Activated CD8-positive, alpha-beta T cell treated with anti-CD3 and anti-CD28 coated beads, Interleukin-2, amount 10 ng/mL, durations not matched to agents 7 days and 5 days (primary cell): ENCODE measurements at regions of chr11 and their contacts with region 1.

Region 1: DNA sequence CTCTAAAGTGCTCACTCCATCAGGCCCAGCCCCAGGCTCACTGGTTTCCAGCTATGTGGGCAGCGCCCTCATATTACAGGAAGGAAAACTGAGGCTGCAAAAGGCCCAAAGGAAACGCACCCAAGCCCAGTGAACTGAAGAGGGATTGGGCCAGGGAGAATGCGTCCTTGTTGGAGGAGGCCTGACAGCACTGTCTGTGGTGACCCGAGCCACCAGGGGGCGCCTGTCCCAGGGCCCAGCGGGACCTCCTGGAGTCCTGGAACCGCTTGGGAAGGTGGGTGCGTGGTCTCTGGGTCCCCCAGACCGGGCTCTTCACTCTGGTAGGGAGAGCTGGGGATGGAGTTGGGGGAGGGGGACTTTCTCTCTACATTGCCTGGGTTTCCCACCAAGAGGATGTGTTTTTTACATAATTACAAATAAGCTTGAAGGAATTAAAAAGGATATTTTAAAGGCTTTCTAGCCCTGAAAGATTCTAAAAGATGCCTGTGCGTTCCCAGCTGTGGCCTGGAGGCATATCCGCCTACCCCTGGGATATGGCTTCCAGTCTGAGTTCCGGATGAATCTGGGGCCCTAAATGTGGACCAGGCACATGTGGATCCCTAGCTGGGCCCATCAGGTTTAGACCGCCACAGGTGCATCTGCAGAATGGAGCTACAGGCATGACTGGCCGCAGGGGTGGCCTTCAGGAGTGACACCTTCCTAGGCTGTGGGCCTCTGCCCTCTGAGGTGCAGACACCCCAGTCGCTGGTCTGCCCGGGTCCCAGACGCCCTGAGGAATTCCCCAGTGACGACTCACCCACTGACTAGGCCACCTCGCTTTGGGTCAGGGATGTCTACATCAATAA is 4.2 kb downstream of the SPI1 start:
- DNase-seq: peak; percentile 85
- ATAC-seq: peak; percentile 95
- H3K4me3 Mint-ChIP-seq: no peak overlapping the region
- H3K27ac Mint-ChIP-seq: no peak overlapping the region
- H3K4me1 Mint-ChIP-seq: peaks cover 14% of the 10 kb centered on the region
- H3K27me3 Mint-ChIP-seq: peaks cover 3% of the 10 kb centered on the region

Region 2: DNA sequence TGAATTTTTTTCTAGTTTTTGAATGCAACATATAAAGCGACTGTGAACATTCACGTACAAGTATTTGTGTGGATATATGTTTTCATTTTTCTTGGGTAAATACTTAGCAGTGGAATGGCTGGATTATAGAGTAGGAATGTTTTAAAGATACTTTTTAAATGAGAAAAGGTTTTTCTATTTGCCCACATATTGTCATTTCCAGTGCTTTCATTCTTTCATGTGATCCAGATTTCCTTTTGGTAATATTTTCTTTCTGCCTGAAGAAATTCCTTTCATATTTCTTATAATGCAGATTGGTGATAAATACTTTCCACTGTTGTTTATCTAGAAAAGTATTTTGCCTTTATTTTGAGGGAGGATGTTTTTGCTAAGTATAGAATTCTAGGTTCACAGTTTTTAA is 151.4 kb before region 1 on chr11:
- CTCF ChIA-PET with region 1: no interaction called
- POLR2A ChIA-PET with region 1: no interaction called
- DNase-seq: no peak
- ATAC-seq: no peak
- H3K4me3 Mint-ChIP-seq: no peak overlapping the region
- H3K27ac Mint-ChIP-seq: no peak overlapping the region
- H3K4me1 Mint-ChIP-seq: peaks cover 49% of the 10 kb centered on the region
- H3K27me3 Mint-ChIP-seq: no peaks in the 10 kb centered on the region

Region 3: DNA sequence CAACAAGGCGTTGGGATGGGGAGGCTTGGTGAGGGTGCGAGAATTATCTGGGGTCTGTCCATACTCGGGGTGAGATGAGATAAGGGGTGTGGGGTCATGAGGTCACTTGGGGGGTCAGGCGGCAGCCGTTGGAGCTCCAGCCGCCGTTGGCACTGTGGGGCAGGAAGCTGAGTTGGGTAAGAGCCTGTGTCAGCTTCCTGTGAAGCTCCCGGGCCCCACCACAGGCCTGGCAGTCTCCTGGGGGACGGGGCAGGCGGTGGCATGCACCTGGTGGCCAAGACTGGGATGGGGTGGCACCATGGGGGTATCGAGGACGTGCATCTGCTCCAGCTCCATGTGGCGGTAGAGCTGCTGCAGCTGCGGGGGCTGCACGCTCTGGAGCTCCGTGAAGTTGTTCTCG is 14.5 kb before region 1 on chr11:
- CTCF ChIA-PET with region 1: interaction called, 24 read pairs
- POLR2A ChIA-PET with region 1: no interaction called
- DNase-seq: peak; percentile 37
- ATAC-seq: peak; percentile 60
- H3K4me3 Mint-ChIP-seq: no peak overlapping the region
- H3K27ac Mint-ChIP-seq: peak overlapping the region; percentile 75
- H3K4me1 Mint-ChIP-seq: peaks cover 15% of the 10 kb centered on the region
- H3K27me3 Mint-ChIP-seq: no peaks in the 10 kb centered on the region

Region 4: DNA sequence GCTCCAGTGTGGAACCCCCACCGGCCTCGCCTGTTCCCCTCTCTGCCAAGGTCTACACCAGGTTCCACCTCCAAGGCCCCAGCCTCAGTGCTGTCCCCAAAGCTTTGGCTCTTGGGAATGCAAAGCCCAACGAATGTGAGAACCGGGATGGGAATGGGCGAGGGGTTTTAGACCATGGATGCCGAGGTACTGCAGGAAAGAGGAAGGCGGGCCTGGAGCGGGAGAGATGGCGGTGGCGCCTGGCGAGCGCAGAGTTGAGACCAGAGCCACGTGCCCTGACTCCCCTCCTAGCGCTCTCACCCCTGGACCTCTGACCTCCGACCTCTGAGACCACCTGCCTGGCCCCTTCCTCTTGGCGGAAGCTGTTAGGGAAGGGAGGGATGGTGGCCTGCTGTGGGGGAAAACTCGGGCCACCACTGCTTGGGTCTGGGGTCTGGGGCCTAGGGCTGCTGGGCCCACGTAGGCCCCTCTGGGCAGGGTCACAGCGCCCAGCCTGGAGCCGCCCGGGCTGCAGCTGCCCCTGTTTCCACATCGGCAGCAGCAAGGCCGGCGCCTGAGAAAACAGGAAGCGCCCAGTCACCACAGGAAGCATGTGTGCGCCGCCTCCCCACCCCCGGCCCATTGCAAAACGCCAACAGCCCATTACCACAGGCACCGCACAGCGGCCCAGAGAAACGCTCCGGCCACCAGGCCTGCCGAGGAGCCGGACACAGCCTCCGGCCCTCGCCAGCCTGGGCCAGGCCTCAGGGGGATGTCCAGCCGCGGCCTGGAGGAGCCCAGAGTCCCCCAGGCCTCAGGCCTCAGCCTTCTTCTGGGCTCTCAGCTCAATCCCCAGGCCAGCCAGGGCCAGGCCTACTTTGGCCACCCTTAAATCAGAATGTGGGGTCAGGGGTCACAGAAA is 20.5 kb after region 1 on chr11:
- CTCF ChIA-PET with region 1: interaction called, 77 read pairs
- POLR2A ChIA-PET with region 1: interaction called, 3 read pairs
- DNase-seq: peak; percentile 71
- ATAC-seq: peak; percentile 80
- H3K4me3 Mint-ChIP-seq: peak overlapping the region; percentile 36
- H3K27ac Mint-ChIP-seq: peak overlapping the region; percentile 93
- H3K4me1 Mint-ChIP-seq: peaks cover 39% of the 10 kb centered on the region
- H3K27me3 Mint-ChIP-seq: no peaks in the 10 kb centered on the region

Region 5: DNA sequence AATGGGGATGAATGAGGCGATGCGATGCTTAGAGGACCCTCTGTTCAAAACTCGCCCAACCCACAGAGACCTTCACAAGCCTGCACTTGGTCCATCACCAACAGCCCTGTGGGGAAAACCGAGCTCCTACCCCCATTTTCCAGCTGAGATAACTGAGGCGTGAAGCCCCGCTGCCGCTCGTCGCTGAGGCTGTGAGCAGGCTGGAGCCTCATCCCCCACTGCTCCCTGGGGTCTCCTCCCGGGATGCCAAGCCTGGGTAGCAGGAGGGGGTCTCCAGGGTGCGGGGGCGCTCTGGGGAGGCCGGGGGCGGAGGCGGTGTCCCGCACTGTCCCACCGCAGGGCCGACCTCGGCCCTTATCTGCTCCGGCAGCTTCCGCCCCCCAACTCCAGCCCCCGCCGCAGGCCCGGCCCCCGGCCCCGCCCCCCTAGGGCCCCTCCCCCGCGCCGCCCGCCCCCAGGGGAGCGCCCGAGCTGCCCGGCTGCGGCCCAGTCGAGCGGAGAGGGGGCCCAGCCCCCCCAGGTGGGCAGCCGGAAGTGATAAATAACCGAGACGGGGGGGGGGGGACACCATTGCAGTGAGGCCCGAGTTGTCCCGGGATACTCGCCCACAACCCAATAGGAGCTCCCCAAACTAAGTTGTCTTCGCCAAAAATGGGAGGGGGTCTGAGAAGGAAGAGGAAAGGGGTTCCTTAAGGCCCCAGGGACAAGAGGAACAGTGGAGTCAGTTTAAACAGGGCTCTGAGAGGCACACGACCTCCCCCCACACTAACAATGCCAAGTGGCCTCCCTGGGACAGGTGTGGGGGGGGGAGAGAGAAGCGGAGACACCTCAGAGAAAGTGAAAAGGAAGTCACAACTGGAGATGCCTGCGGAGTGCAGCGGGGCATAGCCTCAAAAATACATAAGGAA is 26.0 kb after region 1 on chr11:
- CTCF ChIA-PET with region 1: interaction called, 77 read pairs
- POLR2A ChIA-PET with region 1: interaction called, 3 read pairs
- DNase-seq: no peak
- ATAC-seq: peak; percentile 71
- H3K4me3 Mint-ChIP-seq: peak overlapping the region; percentile 68
- H3K27ac Mint-ChIP-seq: peak overlapping the region; percentile 63
- H3K4me1 Mint-ChIP-seq: peaks cover 20% of the 10 kb centered on the region
- H3K27me3 Mint-ChIP-seq: no peaks in the 10 kb centered on the region

Region 6: GRCh38 chr11:47407746-47408590 is 33.9 kb after region 1 on chr11 and contains the start of gene SLC39A13:
- CTCF ChIA-PET with region 1: interaction called, 133 read pairs
- POLR2A ChIA-PET with region 1: no interaction called
- DNase-seq: peak; percentile 91
- ATAC-seq: peak; percentile 84
- H3K4me3 Mint-ChIP-seq: peak within 1 kb of the TSS; percentile 91
- H3K27ac Mint-ChIP-seq: peak within 1 kb of the TSS; percentile 90
- H3K4me1 Mint-ChIP-seq: peaks cover 20% of the 10 kb centered on the region
- H3K27me3 Mint-ChIP-seq: no peaks in the 10 kb centered on the region
- total RNA-seq, gene SLC39A13: 19.2 to 20.0 TPM

Region 7: DNA sequence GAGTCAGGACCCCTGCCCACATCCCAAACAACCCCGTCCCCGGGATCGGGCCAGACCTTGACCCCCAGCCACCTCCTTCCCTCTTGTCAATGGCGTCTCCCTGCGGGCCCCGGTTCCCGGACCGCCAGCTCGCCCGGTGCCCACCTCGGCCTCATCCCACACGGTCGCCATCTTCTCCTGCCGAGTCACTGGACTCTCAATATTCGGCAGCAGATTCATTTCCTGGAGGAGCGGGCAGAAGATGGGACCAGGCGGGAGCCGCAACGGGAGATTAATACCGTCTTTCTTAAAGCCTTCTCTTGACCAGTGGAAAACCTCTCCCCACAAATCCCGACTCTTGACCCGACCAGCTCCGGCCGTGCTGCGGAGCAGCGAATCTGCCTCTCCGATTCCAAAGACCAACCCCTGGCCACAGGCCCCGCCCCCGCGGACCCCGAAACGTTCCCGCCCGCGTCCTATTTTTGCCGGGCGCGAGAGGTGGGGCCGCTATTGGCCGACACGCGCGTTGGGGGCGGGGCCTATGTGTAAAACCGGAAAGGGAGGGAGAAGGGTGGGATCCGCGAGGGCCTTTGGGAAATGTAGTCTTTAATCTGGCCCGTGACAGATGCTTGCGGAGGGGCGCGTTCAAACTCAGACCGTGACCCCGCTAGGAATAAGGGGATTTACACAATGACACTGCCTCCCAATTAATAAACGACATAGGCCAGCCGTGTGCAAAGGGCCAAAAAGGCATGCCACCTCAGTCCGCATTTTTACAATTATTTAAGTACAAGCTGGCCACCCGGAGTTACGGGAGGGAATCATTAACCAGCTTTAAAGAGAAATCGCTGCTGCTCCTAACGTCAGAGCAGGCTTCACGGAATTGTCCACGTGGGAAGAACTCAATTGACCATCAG is 52.2 kb after region 1 on chr11 and contains the start of gene PSMC3:
- CTCF ChIA-PET with region 1: interaction called, 16 read pairs
- POLR2A ChIA-PET with region 1: no interaction called
- DNase-seq: peak; percentile 99
- ATAC-seq: peak; percentile 96
- H3K4me3 Mint-ChIP-seq: peak within 1 kb of the TSS; percentile 100
- H3K27ac Mint-ChIP-seq: peak within 1 kb of the TSS; percentile 100
- H3K4me1 Mint-ChIP-seq: peaks cover 29% of the 10 kb centered on the region
- H3K27me3 Mint-ChIP-seq: no peaks in the 10 kb centered on the region
- total RNA-seq, gene PSMC3: 179 TPM

Region 8: DNA sequence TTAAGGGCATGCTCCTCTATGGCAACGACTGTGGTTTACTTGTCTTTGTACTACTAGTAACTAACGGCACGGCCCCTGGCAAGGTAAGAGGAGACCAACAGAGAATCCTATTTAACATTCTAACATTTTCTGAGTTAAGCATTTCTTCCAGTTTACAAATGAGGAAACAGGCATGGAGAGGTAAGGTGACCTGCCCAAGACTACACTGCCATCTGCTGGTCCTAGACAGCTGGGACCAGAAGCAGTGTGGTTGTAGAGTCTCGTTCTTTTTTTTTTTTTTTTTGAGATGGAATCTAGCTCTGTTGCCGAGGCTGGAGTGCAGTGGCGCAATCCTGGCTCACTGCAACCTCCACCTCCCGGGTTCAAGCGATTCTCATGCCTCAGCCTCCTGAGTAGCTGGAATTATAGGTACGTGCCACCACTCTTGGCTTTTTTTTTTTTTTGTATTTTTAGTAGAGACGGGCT is 80.1 kb after region 1 on chr11:
- CTCF ChIA-PET with region 1: interaction called, 25 read pairs
- POLR2A ChIA-PET with region 1: no interaction called
- DNase-seq: peak; percentile 82
- ATAC-seq: peak; percentile 88
- H3K4me3 Mint-ChIP-seq: no peak overlapping the region
- H3K27ac Mint-ChIP-seq: no peak overlapping the region
- H3K4me1 Mint-ChIP-seq: peaks cover 3% of the 10 kb centered on the region
- H3K27me3 Mint-ChIP-seq: no peaks in the 10 kb centered on the region